Endothelial cell of umbilical vein (primary cell): ENCODE measurements at regions of chr4 and their contacts with region 1.

Region 1: GRCh38 chr4:167622481-167623246 is 388.4 kb upstream of the SPOCK3 start:
- DNase-seq: peak; percentile 53
- H3K4me3 ChIP-seq: no peak overlapping the region
- H3K27ac ChIP-seq: no peak overlapping the region
- H3K4me1 ChIP-seq: no peaks in the 10 kb centered on the region
- H3K27me3 ChIP-seq: no peaks in the 10 kb centered on the region
- CTCF ChIP-seq: peak; percentile 78 to 91
- POLR2A ChIP-seq: no peak

Region 2: GRCh38 chr4:167642250-167642649 is 19.6 kb after region 1 on chr4:
- CTCF ChIA-PET with region 1: interaction called, 15 read pairs
- POLR2A ChIA-PET with region 1: no interaction called
- dilution Hi-C with region 1: no loop called
- intact Hi-C with region 1: no loop called
- DNase-seq: peak; percentile 13
- H3K4me3 ChIP-seq: no peak overlapping the region
- H3K27ac ChIP-seq: no peak overlapping the region
- H3K4me1 ChIP-seq: no peaks in the 10 kb centered on the region
- H3K27me3 ChIP-seq: no peaks in the 10 kb centered on the region
- CTCF ChIP-seq: no peak
- POLR2A ChIP-seq: no peak

Region 3: GRCh38 chr4:167652267-167652666 is 29.6 kb after region 1 on chr4:
- CTCF ChIA-PET with region 1: interaction called, 11 read pairs
- POLR2A ChIA-PET with region 1: no interaction called
- dilution Hi-C with region 1: no loop called
- intact Hi-C with region 1: no loop called
- DNase-seq: no peak
- H3K4me3 ChIP-seq: no peak overlapping the region
- H3K27ac ChIP-seq: no peak overlapping the region
- H3K4me1 ChIP-seq: no peaks in the 10 kb centered on the region
- H3K27me3 ChIP-seq: no peaks in the 10 kb centered on the region
- CTCF ChIP-seq: no peak
- POLR2A ChIP-seq: no peak